Activated naive CD4-positive, alpha-beta T cell treated with anti-CD3 and anti-CD28 coated beads for 36 hours (primary cell): ENCODE measurements at regions of chr9 and their contacts with region 1.

Region 1: DNA sequence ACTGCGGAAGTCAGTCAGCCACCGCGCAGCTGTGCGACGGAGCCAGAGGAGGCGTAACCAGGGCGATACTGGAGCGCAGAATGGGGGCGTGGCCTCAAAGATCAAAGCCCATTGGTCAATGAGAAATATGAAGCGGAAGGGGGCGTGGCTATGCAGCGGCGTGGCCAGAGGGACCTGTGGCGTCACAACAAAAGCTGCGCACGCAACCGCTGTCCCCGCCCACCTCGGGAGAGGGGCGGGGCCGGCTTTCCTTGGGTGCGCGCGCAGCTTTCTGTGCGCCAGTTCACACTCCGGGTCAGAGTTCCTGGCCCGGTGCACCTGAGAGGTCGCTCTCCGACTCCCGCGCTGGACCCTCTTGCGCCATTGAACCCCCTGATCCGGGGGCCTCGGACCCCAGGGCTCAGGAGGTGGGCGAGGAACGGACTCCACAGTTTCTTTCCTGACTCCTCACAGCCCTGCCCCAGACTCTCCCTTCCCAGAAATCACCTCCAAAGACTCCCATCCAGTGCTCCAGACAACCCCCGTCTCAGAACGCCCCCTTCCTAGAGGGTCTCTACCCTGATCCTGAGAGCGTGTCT is at the starts of genes GOLGA2 and SWI5:
- DNase-seq: peak; percentile 100
- H3K4me3 Mint-ChIP-seq: peak within 1 kb of the TSS; percentile 94
- H3K27ac Mint-ChIP-seq: peak within 1 kb of the TSS; percentile 86
- H3K4me1 Mint-ChIP-seq: peaks cover 32% of the 10 kb centered on the region
- H3K27me3 Mint-ChIP-seq: no peaks in the 10 kb centered on the region
- total RNA-seq, gene GOLGA2: 33.3 to 34.4 TPM
- total RNA-seq, gene SWI5: 13.3 to 15.5 TPM

Region 2: GRCh38 chr9:128191406-128192046 is 84.6 kb before region 1 on chr9 and contains the start of gene CIZ1:
- CTCF ChIA-PET with region 1: no interaction called
- intact Hi-C with region 1: loop called (anchors 5 kb)
- DNase-seq: peak; percentile 71
- H3K4me3 Mint-ChIP-seq: peak within 1 kb of the TSS; percentile 96
- H3K27ac Mint-ChIP-seq: peak within 1 kb of the TSS; percentile 83
- H3K4me1 Mint-ChIP-seq: peaks cover 21% of the 10 kb centered on the region
- H3K27me3 Mint-ChIP-seq: no peaks in the 10 kb centered on the region
- total RNA-seq, gene CIZ1: 79.5 to 82.8 TPM

Region 3: GRCh38 chr9:128322404-128323211 is 46.5 kb after region 1 on chr9 and contains the starts of genes COQ4 and TRUB2:
- CTCF ChIA-PET with region 1: no interaction called
- intact Hi-C with region 1: loop called (anchors 1 kb)
- DNase-seq: peak; percentile 95
- H3K4me3 Mint-ChIP-seq: peak within 1 kb of the TSS; percentile 90
- H3K27ac Mint-ChIP-seq: peak within 1 kb of the TSS; percentile 94
- H3K4me1 Mint-ChIP-seq: peaks cover 22% of the 10 kb centered on the region
- H3K27me3 Mint-ChIP-seq: no peaks in the 10 kb centered on the region
- total RNA-seq, gene COQ4: 27.8 to 29.6 TPM
- total RNA-seq, gene TRUB2: 28.0 to 29.4 TPM

Region 4: GRCh38 chr9:128333451-128333869 is 57.4 kb after region 1 on chr9:
- CTCF ChIA-PET with region 1: no interaction called
- intact Hi-C with region 1: no loop called
- DNase-seq: no peak
- H3K4me3 Mint-ChIP-seq: no peak overlapping the region
- H3K27ac Mint-ChIP-seq: no peak overlapping the region
- H3K4me1 Mint-ChIP-seq: no peaks in the 10 kb centered on the region
- H3K27me3 Mint-ChIP-seq: no peaks in the 10 kb centered on the region

Region 5: DNA sequence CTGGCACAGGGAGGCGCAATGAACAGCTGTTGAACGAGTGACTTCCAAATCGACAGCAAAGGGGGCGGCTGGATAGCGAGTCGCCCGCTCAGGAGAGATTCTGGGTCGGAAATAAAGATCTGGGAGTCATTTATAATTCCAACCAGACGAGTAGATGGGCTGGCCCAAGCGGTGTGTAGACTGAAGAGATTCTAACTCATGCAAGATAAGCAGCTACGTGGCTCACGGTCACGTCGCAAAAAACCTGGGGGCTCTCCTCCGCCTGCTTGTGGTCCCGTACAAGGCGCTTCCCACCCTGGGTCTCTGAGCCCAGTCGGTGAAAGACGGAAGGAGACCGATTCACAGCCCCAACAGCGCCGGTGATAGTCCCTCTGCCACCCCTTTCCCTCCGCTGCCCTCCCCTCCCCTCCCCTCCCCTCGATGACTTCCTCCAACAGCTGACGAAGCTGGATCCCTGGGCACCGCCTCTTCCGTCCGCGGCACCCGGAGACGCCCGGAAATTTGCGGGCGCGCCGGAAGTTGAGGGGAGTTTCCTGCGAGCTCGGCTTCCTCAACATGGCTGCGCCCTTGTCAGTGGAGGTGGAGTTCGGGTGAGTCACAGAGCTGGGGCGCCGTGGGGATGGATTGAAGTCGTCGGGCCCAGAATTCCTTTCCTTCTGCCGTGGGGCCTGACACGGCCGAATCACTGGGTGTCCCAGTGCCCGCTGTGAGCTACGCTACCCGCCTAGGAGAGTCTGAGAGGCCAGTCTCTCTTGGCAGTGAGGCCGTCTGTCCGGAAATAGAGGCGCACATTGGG is 94.9 kb after region 1 on chr9 and contains the start of gene URM1:
- CTCF ChIA-PET with region 1: no interaction called
- intact Hi-C with region 1: loop called (anchors 1 kb)
- DNase-seq: peak; percentile 97
- H3K4me3 Mint-ChIP-seq: peak within 1 kb of the TSS; percentile 92
- H3K27ac Mint-ChIP-seq: peak within 1 kb of the TSS; percentile 92
- H3K4me1 Mint-ChIP-seq: peaks cover 28% of the 10 kb centered on the region
- H3K27me3 Mint-ChIP-seq: no peaks in the 10 kb centered on the region
- total RNA-seq, gene URM1: 44.4 to 45.2 TPM

Region 6: GRCh38 chr9:128723866-128724743 is 448.0 kb after region 1 on chr9 and contains the start of gene ZDHHC12:
- CTCF ChIA-PET with region 1: no interaction called
- intact Hi-C with region 1: loop called (anchors 1 kb)
- DNase-seq: peak; percentile 100
- H3K4me3 Mint-ChIP-seq: peak within 1 kb of the TSS; percentile 97
- H3K27ac Mint-ChIP-seq: peak within 1 kb of the TSS; percentile 94
- H3K4me1 Mint-ChIP-seq: peaks cover 28% of the 10 kb centered on the region
- H3K27me3 Mint-ChIP-seq: no peaks in the 10 kb centered on the region
- total RNA-seq, gene ZDHHC12: 50.9 to 53.1 TPM